Posterior vena cava (tissue), 2 donors: ENCODE measurements at regions of chr1 and their contacts with region 1.

Region 1: GRCh38 chr1:109327285-109327684 is 20.5 kb upstream of the MYBPHL start:
- DNase-seq: no peak

Region 2: GRCh38 chr1:109296782-109297181 is 30.5 kb before region 1 on chr1:
- intact Hi-C with region 1: loop called in 1 of 2 experiments (anchors 1 kb)
- DNase-seq: no peak

Region 3: GRCh38 chr1:109457819-109458218 is 130.5 kb after region 1 on chr1:
- intact Hi-C with region 1: no loop called
- DNase-seq: no peak